ENCODE measurements at regions of chr12 and their contacts with region 1.

Region 1: DNA sequence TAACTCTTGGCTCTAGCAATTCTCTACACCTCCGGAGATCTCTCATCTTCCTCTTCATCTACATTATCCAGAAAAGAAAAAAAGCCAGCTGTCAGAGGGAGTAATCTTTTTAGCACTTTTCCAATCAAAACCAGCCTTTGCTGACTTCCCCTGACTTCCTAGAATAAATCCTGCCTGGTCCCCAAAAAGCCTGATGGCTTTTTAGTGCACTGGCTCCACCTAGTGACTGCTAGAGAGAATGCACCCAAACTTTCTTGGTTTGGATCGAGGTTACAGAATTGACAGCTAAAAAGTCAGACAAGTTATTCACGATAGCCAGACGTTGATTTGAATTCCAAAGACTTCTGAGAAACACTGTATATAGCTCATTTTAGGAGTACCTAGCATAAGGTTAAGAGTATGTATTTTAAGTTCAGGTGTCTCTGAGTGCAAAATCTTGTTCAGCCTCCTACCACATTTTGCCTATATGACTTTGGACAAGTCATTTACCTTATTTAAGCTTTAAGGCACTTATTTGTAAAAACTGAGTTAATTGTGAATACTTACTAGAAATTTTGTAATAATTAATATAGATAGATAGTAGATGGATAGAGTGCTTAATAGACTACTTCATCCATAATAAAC is 185.7 kb upstream of the GRIN2B start:
- DNase-seq: no peak
- H3K4me3 ChIP-seq: no peak overlapping the region
- H3K27ac ChIP-seq: no peak overlapping the region
- H3K4me1 ChIP-seq: no peaks in the 10 kb centered on the region
- H3K27me3 ChIP-seq: no peaks in the 10 kb centered on the region
- CTCF ChIP-seq: peak; percentile 65 to 93 (median 82)
- EP300 ChIP-seq: no peak
- POLR2A ChIP-seq: no peak

Region 2: DNA sequence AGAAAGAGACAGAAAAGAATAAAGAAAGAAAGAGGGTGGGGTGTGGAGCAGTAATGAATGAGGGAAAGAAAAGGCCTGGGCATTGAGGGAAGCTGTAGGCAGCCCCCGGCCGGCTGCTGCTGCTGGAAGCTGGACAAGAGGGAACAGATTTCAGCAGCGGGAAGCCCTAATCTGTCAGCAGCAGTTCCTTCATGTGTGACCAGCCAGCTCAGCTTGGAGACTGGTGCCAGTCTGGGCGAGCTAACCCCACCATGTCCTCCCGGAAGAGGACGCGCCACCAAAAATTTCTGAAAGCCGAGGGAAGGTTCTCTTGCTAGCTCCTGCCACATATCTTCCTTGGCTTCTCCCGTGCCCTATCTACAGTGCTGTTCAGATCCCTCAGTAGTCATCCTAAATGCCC is 422.6 kb before region 1 on chr12:
- intact Hi-C with region 1: loop called (anchors 5 kb)
- DNase-seq: no peak
- H3K4me3 ChIP-seq: no peak overlapping the region
- H3K27ac ChIP-seq: no peak overlapping the region
- H3K4me1 ChIP-seq: peaks cover 0 to 3% (median 0%) of the 10 kb centered on the region in 4 donors
- H3K27me3 ChIP-seq: no peaks in the 10 kb centered on the region
- CTCF ChIP-seq: no peak
- EP300 ChIP-seq: no peak
- POLR2A ChIP-seq: no peak

Region 3: DNA sequence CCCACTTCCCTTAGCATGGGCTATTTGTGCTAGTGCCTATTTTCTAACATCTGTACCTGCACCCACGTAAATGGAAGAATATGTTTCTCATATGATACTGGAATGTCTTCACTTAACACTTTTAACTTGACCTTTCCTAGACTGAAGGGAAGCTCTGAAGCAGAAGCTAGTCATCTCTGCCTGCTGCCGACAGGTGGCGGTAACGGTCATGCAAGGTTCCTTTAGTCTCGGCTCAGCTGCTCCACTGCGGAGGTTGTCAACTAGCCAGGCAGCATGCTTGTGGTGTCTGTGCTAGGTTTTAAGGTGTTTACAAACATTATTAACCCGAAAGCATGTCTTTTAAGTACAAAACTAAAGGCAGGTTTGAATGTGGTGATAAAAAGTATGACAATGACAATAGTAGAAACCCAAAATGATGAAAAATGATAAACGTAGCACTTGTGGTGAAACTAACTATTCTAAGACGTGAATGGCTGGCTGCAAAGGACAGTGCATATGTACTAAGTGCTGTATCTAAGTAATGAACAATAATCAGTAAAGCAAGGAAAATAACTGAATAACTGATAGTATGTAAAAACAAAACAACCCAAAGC is 302.9 kb before region 1 on chr12:
- intact Hi-C with region 1: loop called (anchors 1 kb)
- DNase-seq: peak; percentile 79
- H3K4me3 ChIP-seq: no peak overlapping the region
- H3K27ac ChIP-seq: no peak overlapping the region
- H3K4me1 ChIP-seq: no peaks in the 10 kb centered on the region
- H3K27me3 ChIP-seq: peaks cover 0 to 6% (median 0%) of the 10 kb centered on the region in 3 donors
- CTCF ChIP-seq: peak in 3 of 4 experiments; percentile 73 to 86 (median 80)
- EP300 ChIP-seq: no peak
- POLR2A ChIP-seq: no peak

Region 4: GRCh38 chr12:14578646-14579045 is 411.5 kb after region 1 on chr12:
- intact Hi-C with region 1: no loop called
- DNase-seq: no peak
- H3K4me3 ChIP-seq: no peak overlapping the region
- H3K27ac ChIP-seq: no peak overlapping the region
- H3K4me1 ChIP-seq: no peaks in the 10 kb centered on the region
- H3K27me3 ChIP-seq: no peaks in the 10 kb centered on the region
- CTCF ChIP-seq: no peak
- EP300 ChIP-seq: no peak
- POLR2A ChIP-seq: no peak